CD4-positive, alpha-beta T cell (primary cell): ENCODE measurements at regions of chr1 and their contacts with region 1.

Region 1: GRCh38 chr1:168520052-168520751 is 23.6 kb downstream of the XCL2 start:
- DNase-seq: peak in 5 of 14 experiments; percentile 9 to 81 (median 40)
- ATAC-seq: peak; percentile 83
- H3K4me3 ChIP-seq: no peak overlapping the region
- H3K4me3 Mint-ChIP-seq: peak overlapping the region; percentile 32
- H3K27ac ChIP-seq: peak overlapping the region; percentile 25 to 58
- H3K27ac Mint-ChIP-seq: peak overlapping the region; percentile 79
- H3K4me1 ChIP-seq: peaks cover 34% of the 10 kb centered on the region
- H3K4me1 Mint-ChIP-seq: peaks cover 61% of the 10 kb centered on the region
- H3K27me3 ChIP-seq: no peaks in the 10 kb centered on the region
- H3K27me3 Mint-ChIP-seq: no peaks in the 10 kb centered on the region
- CTCF ChIP-seq: no peak

Region 2: GRCh38 chr1:168488138-168488537 is 32.1 kb before region 1 on chr1:
- CTCF ChIA-PET with region 1: no interaction called
- POLR2A ChIA-PET with region 1: no interaction called
- intact Hi-C with region 1: loop called in 1 of 2 experiments (anchors 5 kb)
- DNase-seq: no peak
- ATAC-seq: no peak
- H3K4me3 ChIP-seq: no peak overlapping the region
- H3K4me3 Mint-ChIP-seq: no peak overlapping the region
- H3K27ac ChIP-seq: no peak overlapping the region
- H3K27ac Mint-ChIP-seq: no peak overlapping the region
- H3K4me1 ChIP-seq: peaks cover 11% of the 10 kb centered on the region
- H3K4me1 Mint-ChIP-seq: peaks cover 45% of the 10 kb centered on the region
- H3K27me3 ChIP-seq: no peaks in the 10 kb centered on the region
- H3K27me3 Mint-ChIP-seq: no peaks in the 10 kb centered on the region
- CTCF ChIP-seq: no peak

Region 3: GRCh38 chr1:168535536-168535935 is 15.3 kb after region 1 on chr1:
- CTCF ChIA-PET with region 1: no interaction called
- POLR2A ChIA-PET with region 1: interaction called, 22 read pairs
- intact Hi-C with region 1: loop called in 1 of 2 experiments (anchors 2 kb)
- DNase-seq: peak in 4 of 14 experiments; percentile 50 to 86 (median 64)
- ATAC-seq: peak; percentile 76
- H3K4me3 ChIP-seq: peak overlapping the region; percentile 31
- H3K4me3 Mint-ChIP-seq: peak overlapping the region; percentile 45
- H3K27ac ChIP-seq: peak overlapping the region in 1 of 2 donors; percentile 80
- H3K27ac Mint-ChIP-seq: peak overlapping the region; percentile 85
- H3K4me1 ChIP-seq: peaks cover 39% of the 10 kb centered on the region
- H3K4me1 Mint-ChIP-seq: peaks cover 82% of the 10 kb centered on the region
- H3K27me3 ChIP-seq: no peaks in the 10 kb centered on the region
- H3K27me3 Mint-ChIP-seq: no peaks in the 10 kb centered on the region
- CTCF ChIP-seq: no peak